Esophagus muscularis mucosa (tissue), 4 donors: ENCODE measurements at regions of chr2 and their contacts with region 1.

Region 1: DNA sequence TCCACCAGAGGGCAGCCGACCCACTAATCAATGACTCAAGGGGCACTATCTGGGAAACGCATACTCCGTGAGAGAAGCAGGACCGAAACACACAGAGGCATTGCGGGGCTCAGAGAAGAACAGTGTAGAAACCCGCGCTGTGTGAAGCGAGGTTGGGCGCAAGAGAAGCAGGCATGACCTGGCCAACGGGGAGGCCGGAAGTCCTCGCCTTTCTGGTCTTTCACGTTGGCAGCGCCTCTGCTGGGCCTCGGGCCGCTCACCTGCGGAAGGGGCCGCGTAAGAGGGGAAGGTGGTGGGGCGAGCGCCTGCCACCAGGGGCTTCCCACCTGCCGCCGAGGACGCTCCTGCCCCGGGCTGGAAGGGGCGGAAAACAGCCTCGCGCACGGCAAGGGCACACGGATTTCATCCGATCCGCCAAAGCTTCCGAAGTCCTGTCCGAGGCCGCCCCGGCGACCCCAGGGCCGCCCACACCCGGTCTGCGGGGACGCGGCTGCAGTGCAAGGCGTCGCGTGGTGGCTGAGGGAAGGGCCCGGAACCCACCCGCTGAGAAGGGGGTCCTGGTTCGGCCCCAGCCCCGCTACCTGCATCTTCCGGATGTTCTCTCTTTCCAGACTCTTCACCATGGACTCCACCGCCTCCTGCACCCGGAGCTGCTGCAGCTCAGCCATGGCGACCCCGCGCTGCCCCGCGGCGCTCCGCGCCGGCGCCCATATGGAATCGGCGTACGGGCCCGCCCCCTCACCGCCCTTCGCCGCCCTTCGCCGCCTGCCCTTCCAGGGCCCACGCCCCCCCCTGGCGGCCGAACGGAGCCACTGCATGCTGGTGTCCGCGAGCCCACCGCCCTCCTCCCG is at the start of gene FAM136A:
- DNase-seq: peak; percentile 96
- H3K4me3 ChIP-seq: peak within 1 kb of the TSS; percentile 79 to 99 (median 91)
- H3K27ac ChIP-seq: peak within 1 kb of the TSS; percentile 80 to 91 (median 85)
- H3K4me1 ChIP-seq: peaks cover 6 to 22% (median 17%) of the 10 kb centered on the region in 4 donors
- H3K27me3 ChIP-seq: no peaks in the 10 kb centered on the region
- CTCF ChIP-seq: peak; percentile 97 to 99 (median 97)
- EP300 ChIP-seq: no peak
- POLR2A ChIP-seq: no peak
- total RNA-seq, gene FAM136A: 19.4 to 29.4 (median 23.7) TPM

Region 2: DNA sequence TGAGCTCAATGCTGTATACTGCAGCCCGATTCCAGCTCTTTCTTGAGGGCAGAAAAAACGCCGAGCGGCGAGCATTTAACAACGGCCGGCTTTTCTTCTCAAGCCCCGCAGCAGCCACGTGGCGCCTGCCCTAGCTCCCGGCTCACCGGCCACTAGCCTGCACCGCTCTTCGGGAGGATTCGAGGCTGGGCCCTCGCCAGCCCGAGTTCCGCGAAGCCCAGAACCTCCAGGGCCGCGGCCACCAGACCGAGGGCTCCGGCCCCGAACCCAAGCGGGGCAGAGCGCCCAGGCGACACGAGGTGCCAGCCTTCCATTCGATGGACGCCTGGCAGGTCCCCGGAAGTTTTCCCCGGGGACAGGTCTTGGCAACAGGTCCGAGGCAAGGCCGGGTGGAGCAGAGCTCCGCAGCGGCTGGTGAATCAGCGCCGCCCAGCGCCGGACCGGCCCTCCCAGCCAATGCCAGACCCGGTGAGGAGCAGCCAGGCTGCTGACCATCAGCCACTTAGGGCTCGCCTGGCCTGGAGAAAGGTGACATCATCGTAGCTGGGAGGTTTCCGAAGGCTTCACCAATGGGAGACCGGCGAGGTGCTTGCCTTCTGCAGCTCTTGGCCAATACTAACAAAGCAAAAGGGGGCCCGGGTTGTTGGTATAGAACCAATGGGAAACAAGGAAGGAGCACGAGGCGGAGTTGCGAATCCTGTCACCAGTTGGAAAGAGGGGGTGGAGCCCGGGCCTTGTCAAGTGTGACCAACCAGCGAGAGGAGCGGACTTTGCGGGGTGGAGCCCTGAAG is 387.2 kb before region 1 on chr2:
- intact Hi-C with region 1: loop called (anchors 5 kb)
- DNase-seq: peak; percentile 100
- H3K4me3 ChIP-seq: peak overlapping the region; percentile 76 to 99 (median 94)
- H3K27ac ChIP-seq: peak overlapping the region; percentile 94 to 99 (median 98)
- H3K4me1 ChIP-seq: peaks cover 24 to 50% (median 47%) of the 10 kb centered on the region in 4 donors
- H3K27me3 ChIP-seq: no peaks in the 10 kb centered on the region
- CTCF ChIP-seq: peak in 2 of 3 experiments; percentile 7 to 32
- EP300 ChIP-seq: no peak
- POLR2A ChIP-seq: peak; percentile 89

Region 3: DNA sequence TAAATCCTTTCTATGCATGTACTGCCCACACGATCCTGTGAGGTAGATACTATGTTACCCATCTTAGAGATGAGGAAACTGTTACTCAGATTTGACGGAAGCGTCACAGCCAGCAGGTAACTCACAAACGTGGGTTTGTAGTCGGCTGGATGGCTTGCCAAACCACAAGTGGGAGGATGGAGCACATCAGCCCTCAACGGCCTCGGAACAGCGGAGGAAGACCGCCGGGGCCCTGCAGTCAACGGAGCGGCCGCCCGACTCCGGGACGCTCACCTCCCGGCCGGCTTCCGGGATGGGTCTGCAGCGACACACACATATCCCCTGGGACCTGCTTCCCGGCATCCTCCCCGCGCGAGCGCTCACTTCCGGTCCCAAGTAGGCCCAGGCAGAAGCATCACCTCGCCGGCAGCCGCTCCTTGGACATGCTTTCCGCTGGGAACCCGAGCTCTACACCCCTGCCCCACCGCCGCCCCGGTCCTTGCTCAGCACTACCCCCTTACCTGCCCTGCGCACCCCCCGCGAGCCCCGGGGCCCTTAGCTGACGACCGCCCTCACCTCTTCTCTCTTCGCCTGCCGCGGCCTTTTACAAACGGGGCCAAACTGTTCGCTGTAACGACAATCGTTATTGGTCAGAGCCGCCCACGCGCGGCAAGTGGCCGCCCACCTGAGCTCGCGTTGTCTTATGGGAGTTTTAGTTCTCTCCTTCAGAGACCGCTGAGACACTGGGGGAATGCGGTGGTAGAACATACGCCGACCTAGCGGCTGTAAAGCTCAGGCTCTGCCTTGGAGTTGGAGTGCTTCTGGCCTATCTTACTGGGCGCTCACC is 110.9 kb before region 1 on chr2 and contains the start of gene C2orf42:
- intact Hi-C with region 1: loop called (anchors 5 kb)
- DNase-seq: peak; percentile 99
- H3K4me3 ChIP-seq: peak within 1 kb of the TSS; percentile 70 to 80 (median 76)
- H3K27ac ChIP-seq: peak within 1 kb of the TSS; percentile 95 to 98 (median 98)
- H3K4me1 ChIP-seq: peaks cover 8 to 16% (median 12%) of the 10 kb centered on the region in 4 donors
- H3K27me3 ChIP-seq: no peaks in the 10 kb centered on the region
- CTCF ChIP-seq: peak in 2 of 3 experiments; percentile 14 to 25
- EP300 ChIP-seq: no peak
- POLR2A ChIP-seq: peak; percentile 97
- total RNA-seq, gene C2orf42: 15.4 to 20.9 (median 17.9) TPM

Region 4: DNA sequence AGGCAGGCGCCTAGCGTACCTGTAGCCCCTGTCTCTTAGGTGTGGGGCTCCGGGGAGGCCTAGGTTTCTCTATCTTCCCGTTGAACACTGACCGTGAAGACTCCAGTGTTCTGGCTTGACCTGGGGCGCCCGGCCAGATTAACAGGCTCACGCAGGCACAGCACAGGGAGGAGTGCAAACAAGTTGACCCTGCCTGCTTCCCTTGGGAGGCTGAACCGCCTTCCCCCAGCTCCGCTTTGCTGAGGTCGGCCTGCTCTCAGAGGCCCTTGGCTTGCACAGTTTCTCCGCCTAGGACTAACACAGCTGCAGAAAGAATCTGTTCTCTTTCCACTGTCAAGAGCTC is 43.1 kb before region 1 on chr2:
- intact Hi-C with region 1: loop called (anchors 5 kb)
- DNase-seq: no peak
- H3K4me3 ChIP-seq: peak overlapping the region; percentile 81 to 99 (median 94)
- H3K27ac ChIP-seq: peak overlapping the region; percentile 88 to 93 (median 92)
- H3K4me1 ChIP-seq: peaks cover 31 to 55% (median 49%) of the 10 kb centered on the region in 4 donors
- H3K27me3 ChIP-seq: no peaks in the 10 kb centered on the region
- CTCF ChIP-seq: no peak
- EP300 ChIP-seq: no peak
- POLR2A ChIP-seq: no peak

Region 5: DNA sequence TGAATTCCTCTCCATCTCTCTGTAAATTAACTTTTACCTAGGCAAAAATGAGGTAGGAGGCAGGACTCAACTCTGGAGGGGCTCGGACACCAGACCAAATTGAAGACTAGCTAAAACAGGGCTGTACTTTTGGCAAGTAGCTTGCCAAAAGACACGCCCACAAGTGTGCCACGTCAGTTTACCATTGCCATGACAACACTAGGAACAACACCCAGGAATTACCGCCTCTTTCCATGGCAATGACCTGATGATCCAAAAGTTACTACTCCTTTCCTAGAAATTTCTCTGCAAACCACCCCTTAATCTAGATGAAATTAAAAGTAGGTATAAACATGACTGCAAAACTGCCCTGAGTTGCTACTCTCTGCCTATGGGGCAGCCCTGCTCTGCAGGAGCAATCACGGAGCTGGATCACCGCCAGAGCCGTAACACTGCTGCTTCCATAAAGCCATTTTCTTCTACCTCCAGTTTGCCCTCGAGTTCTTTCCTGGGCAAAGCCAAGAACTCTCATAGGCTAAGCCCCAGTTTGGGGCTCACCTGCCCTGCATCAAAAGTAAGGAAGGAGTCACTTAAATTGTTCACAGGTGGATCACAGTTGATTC is 66.3 kb after region 1 on chr2:
- intact Hi-C with region 1: no loop called
- DNase-seq: no peak
- H3K4me3 ChIP-seq: no peak overlapping the region
- H3K27ac ChIP-seq: no peak overlapping the region
- H3K4me1 ChIP-seq: no peaks in the 10 kb centered on the region
- H3K27me3 ChIP-seq: no peaks in the 10 kb centered on the region
- CTCF ChIP-seq: no peak
- EP300 ChIP-seq: no peak
- POLR2A ChIP-seq: no peak

Region 6: GRCh38 chr2:70616168-70616694 is 314.7 kb after region 1 on chr2:
- intact Hi-C with region 1: loop called (anchors 2 kb)
- DNase-seq: no peak
- H3K4me3 ChIP-seq: no peak overlapping the region
- H3K27ac ChIP-seq: no peak overlapping the region
- H3K4me1 ChIP-seq: peaks cover 0 to 7% (median 2%) of the 10 kb centered on the region in 4 donors
- H3K27me3 ChIP-seq: peaks cover 0 to 5% (median 0%) of the 10 kb centered on the region in 4 donors
- CTCF ChIP-seq: no peak
- EP300 ChIP-seq: no peak
- POLR2A ChIP-seq: no peak

Region 7: DNA sequence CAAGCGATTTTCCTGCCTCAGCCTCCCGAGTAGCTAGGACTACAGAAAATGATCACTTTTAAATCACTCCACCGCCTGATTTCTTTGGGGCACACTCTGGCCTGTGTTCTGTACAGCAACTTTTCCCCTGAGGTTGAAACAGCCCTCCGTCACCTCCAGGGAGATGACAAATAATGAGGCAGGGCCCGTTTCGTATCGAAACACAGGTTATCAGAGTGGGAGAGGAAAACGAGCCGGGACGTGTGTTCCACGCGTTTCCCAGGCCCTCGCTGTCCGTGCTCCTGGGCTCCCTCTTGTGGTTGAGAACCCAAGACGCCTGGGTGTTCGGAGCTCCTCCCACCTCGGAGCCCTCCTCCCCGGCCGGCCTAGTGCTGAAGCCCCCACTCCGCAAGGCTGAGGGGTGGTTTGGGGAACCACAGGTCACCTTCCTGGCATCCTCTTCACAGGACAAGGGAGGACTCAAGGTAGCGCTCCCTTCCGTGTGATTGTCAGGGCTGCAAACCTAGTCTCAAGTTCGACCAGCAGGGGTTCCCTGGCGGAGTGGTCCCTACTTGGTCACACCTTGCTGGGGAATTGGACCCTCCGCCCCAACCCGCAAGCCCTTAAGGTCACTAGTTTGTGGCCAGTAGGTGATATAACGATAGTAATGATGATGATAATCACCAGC is 646.9 kb after region 1 on chr2:
- intact Hi-C with region 1: loop called (anchors 10 kb)
- DNase-seq: peak; percentile 93
- H3K4me3 ChIP-seq: peak overlapping the region; percentile 39 to 54 (median 44)
- H3K27ac ChIP-seq: no peak overlapping the region
- H3K4me1 ChIP-seq: peaks cover 8 to 24% (median 13%) of the 10 kb centered on the region in 4 donors
- H3K27me3 ChIP-seq: peaks cover 0 to 29% (median 0%) of the 10 kb centered on the region in 4 donors
- CTCF ChIP-seq: peak; percentile 69 to 85 (median 77)
- EP300 ChIP-seq: no peak
- POLR2A ChIP-seq: no peak